CD14-positive monocyte (primary cell): ENCODE measurements at regions of chr1 and their contacts with region 1.

Region 1: GRCh38 chr1:2326524-2326923 is 64.8 kb downstream of the MORN1 start:
- DNase-seq: no peak
- H3K4me3 ChIP-seq: no peak overlapping the region
- H3K4me3 Mint-ChIP-seq: no peak overlapping the region
- H3K27ac ChIP-seq: no peak overlapping the region
- H3K27ac Mint-ChIP-seq: no peak overlapping the region
- H3K4me1 ChIP-seq: no peaks in the 10 kb centered on the region
- H3K4me1 Mint-ChIP-seq: no peaks in the 10 kb centered on the region
- H3K27me3 ChIP-seq: peaks cover 0 to 10% of the 10 kb centered on the region in 2 donors
- H3K27me3 Mint-ChIP-seq: peaks cover 8 to 18% (median 18%) of the 10 kb centered on the region in 3 donors
- CTCF ChIP-seq: no peak

Region 2: DNA sequence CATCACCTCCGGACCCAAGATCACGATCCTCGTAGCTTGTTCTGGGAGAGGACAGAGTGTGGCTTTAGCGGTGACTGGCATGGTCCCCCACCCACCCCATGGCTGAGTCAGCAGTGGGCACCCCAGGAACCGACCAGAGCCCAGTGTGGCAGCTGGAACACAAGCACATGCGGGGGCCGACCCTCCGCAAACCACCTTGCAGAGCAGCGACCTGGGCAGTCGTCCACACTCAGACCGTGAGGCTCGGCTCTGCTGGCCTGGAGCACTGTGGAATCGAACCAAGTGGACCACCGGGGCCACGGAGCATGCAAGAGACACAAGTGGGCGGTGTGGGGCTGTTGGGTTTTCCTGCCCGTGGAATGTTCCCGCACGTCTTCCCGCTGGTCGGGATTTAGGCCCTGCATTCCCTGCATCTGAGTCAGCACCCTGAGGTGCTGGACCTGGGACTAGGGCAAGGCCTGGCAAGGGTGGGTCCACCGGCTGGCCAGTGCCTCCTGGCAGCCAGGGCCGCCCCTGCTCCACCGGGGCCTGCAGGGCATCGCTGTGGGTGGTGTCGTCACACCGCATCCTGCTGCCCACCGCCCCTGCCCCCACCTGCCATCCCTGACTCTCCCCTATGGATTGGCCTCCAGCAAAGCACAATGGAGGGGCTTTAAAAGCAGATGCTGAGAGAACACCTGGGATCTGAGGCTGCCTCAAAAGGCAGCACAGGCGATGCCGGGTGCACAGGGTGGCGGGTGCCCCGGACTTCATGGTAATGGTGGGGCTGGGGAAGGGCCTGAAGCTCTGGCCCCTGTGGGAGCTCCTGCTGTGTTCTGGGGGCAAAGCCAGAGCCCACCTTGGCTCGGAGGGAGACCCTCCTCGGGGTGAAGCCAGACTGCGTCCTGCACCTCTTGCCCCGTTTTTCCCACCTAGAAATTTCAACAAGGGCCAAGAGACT is 46.3 kb after region 1 on chr1:
- intact Hi-C with region 1: loop called in 1 of 2 experiments (anchors 5 kb)
- DNase-seq: no peak
- H3K4me3 ChIP-seq: no peak overlapping the region
- H3K4me3 Mint-ChIP-seq: no peak overlapping the region
- H3K27ac ChIP-seq: no peak overlapping the region
- H3K27ac Mint-ChIP-seq: no peak overlapping the region
- H3K4me1 ChIP-seq: no peaks in the 10 kb centered on the region
- H3K4me1 Mint-ChIP-seq: no peaks in the 10 kb centered on the region
- H3K27me3 ChIP-seq: no peaks in the 10 kb centered on the region
- H3K27me3 Mint-ChIP-seq: peaks cover 0 to 1% (median 0%) of the 10 kb centered on the region in 3 donors
- CTCF ChIP-seq: no peak